Panc1 (cell line): ENCODE measurements at regions of chr17 and their contacts with region 1.

Region 1: DNA sequence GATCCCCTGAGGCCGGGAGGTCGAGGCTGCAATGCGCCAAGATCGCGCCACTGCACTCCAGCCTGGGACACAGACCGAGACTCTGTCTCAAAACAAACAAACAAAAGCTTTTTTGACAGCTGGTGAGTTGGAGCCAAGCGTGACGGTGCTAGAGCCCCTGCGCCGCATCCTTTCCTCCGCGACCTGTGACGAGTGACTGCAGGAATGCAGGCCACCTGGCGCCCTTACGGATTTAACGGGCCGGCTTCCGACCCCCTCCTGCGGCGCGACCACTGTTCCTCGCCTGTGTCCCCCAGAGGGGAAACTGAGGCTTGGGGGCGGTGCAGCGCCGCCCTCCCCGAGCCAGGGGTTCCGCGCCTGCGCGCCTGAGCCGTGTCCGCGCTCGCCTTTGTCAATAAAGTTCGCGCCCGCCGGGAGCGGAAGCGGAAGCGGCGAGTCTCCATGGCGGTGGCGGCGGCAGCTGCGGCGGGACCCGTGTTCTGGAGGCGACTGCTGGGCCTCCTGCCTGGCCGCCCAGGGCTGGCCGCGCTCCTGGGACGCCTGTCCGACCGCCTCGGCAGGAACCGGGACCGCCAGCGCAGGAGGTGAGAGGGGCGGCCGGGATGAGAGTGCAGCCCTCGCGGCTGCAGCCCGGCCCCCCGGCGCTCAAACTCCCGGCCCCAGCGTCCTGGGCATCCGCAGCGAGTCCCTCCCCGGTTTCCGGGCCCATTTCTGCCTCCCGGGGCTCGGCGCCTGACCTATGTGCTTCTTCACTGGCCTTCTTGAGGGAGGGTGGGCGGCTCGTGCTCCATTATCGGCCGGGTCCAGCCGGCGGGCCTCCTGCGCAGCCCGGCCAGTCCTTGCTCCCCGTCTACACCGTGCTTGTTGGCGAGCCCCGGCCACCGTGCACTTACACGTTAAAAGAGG is at the start of gene PGS1:
- DNase-seq: no peak
- ATAC-seq: peak; percentile 82
- H3K4me3 ChIP-seq: peak within 1 kb of the TSS; percentile 74 to 89
- H3K27ac ChIP-seq: peak within 1 kb of the TSS; percentile 82
- H3K4me1 ChIP-seq: peaks cover 45% of the 10 kb centered on the region
- H3K27me3 ChIP-seq: no peaks in the 10 kb centered on the region
- CTCF ChIP-seq: no peak
- total RNA-seq, gene PGS1: 47.5 TPM

Region 2: GRCh38 chr17:77254951-77255825 is 1123.3 kb before region 1 on chr17:
- CTCF ChIA-PET with region 1: interaction called, 16 read pairs
- POLR2A ChIA-PET with region 1: no interaction called
- in situ Hi-C with region 1: no loop called
- intact Hi-C with region 1: no loop called
- DNase-seq: peak; percentile 75
- ATAC-seq: peak; percentile 90
- H3K4me3 ChIP-seq: peak overlapping the region in 1 of 2 experiments; percentile 20; a peak in 2 of 4 replicates
- H3K27ac ChIP-seq: peak overlapping the region; percentile 97
- H3K4me1 ChIP-seq: peaks cover 38% of the 10 kb centered on the region
- H3K27me3 ChIP-seq: no peaks in the 10 kb centered on the region
- CTCF ChIP-seq: no peak

Region 3: GRCh38 chr17:77924757-77925336 is 453.6 kb before region 1 on chr17:
- CTCF ChIA-PET with region 1: no interaction called
- POLR2A ChIA-PET with region 1: interaction called, 10 read pairs
- in situ Hi-C with region 1: no loop called
- intact Hi-C with region 1: no loop called
- DNase-seq: no peak
- ATAC-seq: no peak
- H3K4me3 ChIP-seq: no peak overlapping the region
- H3K27ac ChIP-seq: no peak overlapping the region
- H3K4me1 ChIP-seq: no peaks in the 10 kb centered on the region
- H3K27me3 ChIP-seq: no peaks in the 10 kb centered on the region; the same call in 1 of the 2 replicates
- CTCF ChIP-seq: no peak

Region 4: DNA sequence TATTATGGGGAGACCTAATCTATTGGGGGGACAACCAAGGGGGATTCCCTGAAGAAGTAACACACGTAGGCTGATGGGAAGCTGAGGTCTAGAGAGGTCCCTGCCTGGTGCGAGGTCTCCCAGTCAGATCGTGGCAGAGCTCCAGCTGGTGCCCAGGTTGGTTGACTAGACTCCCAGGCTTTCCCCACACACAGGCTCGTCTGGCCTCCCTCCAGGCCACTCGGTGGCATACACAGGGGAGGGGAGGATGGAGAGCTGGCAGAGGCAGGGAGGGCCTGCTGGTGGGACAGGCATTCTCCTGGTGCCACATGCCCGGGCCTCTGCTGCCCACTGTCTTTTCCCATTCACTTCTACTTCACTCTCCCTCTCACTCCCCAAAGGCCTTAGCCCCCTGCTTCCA is 10.1 kb before region 1 on chr17:
- CTCF ChIA-PET with region 1: interaction called, 3 read pairs
- POLR2A ChIA-PET with region 1: interaction called, 11 read pairs
- in situ Hi-C with region 1: no loop called
- intact Hi-C with region 1: no loop called
- DNase-seq: no peak
- ATAC-seq: no peak
- H3K4me3 ChIP-seq: no peak overlapping the region
- H3K27ac ChIP-seq: no peak overlapping the region
- H3K4me1 ChIP-seq: peaks cover 27% of the 10 kb centered on the region
- H3K27me3 ChIP-seq: no peaks in the 10 kb centered on the region
- CTCF ChIP-seq: no peak